CD14-positive monocyte (primary cell): ENCODE measurements at regions of chr16 and their contacts with region 1.

Region 1: DNA sequence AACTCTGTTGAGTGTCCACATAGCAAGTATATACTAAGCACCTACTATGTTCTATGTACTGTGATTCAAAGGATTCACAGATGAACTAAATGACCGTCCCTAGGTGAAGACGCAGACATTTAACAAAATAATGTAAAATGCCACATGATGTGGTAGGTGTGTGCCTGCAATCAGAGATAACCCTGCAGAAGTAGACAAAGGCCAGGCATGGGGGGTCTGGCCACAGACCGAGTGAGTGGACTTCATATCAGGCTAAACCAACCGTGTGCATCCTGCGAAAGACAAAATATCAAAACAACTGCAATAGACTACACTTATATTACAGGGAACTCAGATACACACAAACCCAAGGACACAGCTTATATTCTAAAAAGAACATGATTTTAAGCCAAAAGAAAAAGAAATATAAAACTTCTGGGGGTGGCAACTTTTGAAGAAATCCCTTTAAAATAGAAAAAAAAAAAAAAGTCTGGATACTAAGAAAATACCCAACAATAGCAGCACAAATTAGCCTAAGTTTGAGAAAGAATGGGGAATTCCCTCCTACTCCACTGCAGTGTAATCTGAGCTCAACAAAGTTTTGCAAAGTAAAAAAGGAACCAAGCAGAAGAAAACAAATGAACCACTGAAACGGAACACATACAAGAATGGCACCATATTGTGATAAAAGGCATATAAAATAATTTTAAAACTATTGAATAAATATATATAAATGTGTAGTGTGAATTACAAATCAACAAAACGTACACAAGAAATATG is 12.3 kb downstream of the HSDL1 start:
- DNase-seq: no peak
- H3K4me3 ChIP-seq: no peak overlapping the region
- H3K4me3 Mint-ChIP-seq: no peak overlapping the region
- H3K27ac ChIP-seq: no peak overlapping the region
- H3K27ac Mint-ChIP-seq: peak overlapping the region in 1 of 7 donors; percentile 21
- H3K4me1 ChIP-seq: no peaks in the 10 kb centered on the region
- H3K4me1 Mint-ChIP-seq: peaks cover 2% of the 10 kb centered on the region
- H3K27me3 ChIP-seq: no peaks in the 10 kb centered on the region
- H3K27me3 Mint-ChIP-seq: no peaks in the 10 kb centered on the region
- CTCF ChIP-seq: no peak

Region 2: GRCh38 chr16:83779886-83780285 is 352.8 kb before region 1 on chr16:
- intact Hi-C with region 1: no loop called
- DNase-seq: no peak
- H3K4me3 ChIP-seq: no peak overlapping the region
- H3K4me3 Mint-ChIP-seq: no peak overlapping the region
- H3K27ac ChIP-seq: no peak overlapping the region
- H3K27ac Mint-ChIP-seq: no peak overlapping the region
- H3K4me1 ChIP-seq: peaks cover 16 to 18% of the 10 kb centered on the region in 2 donors
- H3K4me1 Mint-ChIP-seq: peaks cover 19% of the 10 kb centered on the region
- H3K27me3 ChIP-seq: peaks cover 0 to 7% of the 10 kb centered on the region in 2 donors
- H3K27me3 Mint-ChIP-seq: peaks cover 13 to 30% (median 21%) of the 10 kb centered on the region in 3 donors
- CTCF ChIP-seq: no peak

Region 3: DNA sequence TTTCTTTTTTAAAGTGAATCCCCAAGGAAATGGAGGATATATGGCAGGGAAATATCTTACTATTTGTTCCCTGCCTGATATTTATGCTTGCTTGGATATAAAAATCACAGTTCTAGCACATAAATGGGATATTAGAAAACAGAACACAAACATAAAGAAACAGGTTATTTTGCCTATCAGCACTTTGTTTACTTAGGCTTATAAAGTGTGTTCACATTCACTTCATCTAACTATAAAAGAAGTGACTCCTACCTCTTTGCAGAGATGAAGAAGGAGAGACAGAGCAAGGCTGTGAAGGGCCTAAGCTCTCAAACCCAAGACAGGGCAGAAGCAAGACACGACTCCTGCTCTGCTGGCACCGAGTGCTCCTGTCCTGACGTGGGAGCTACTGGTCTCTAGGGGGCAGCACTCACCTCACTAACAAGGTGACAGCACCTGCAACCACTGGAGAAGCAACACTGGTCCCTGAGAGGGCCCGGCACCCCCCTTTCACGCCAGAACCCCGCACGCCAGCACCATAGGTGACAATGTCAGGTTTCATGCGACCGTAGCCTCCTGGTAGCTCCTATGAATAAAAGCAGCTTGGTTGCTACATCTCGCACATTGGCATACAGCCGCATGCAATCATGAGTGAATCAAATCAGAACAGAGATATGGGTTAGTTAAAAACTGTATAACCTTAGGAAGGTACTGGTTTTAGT is 48.0 kb before region 1 on chr16:
- intact Hi-C with region 1: loop called in 1 of 2 experiments (anchors 5 kb)
- DNase-seq: peak in 2 of 3 donors; percentile 48 to 63
- H3K4me3 ChIP-seq: no peak overlapping the region
- H3K4me3 Mint-ChIP-seq: no peak overlapping the region
- H3K27ac ChIP-seq: peak overlapping the region; percentile 6 to 42
- H3K27ac Mint-ChIP-seq: peak overlapping the region in 3 of 7 donors; percentile 7 to 70 (median 57)
- H3K4me1 ChIP-seq: peaks cover 60 to 67% of the 10 kb centered on the region in 2 donors
- H3K4me1 Mint-ChIP-seq: peaks cover 68% of the 10 kb centered on the region
- H3K27me3 ChIP-seq: no peaks in the 10 kb centered on the region
- H3K27me3 Mint-ChIP-seq: peaks cover 0 to 3% (median 0%) of the 10 kb centered on the region in 3 donors
- CTCF ChIP-seq: peak; percentile 77

Region 4: DNA sequence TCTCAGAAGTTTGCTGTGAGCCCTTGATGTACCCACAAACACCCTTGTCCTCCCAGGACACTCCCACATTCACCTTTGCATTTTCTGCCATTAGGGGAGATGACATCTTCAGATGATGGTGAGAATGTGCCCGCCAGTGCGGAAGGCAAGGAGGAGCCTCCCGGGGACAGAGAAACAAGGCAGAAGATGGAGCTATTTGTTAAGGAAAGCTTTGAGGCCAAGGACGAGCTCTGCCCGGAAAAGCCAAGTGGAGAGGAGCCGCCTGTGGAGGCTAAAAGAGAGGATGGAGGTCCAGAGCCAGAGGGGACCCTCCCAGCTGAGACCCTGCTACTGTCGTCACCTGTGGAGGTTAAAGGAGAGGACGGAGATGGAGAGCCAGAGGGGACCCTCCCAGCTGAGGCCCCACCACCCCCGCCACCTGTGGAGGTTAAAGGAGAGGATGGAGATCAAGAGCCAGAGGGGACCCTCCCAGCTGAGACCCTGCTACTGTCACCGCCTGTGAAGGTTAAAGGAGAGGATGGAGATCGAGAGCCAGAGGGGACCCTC is 37.1 kb after region 1 on chr16:
- intact Hi-C with region 1: loop called in 1 of 2 experiments (anchors 5 kb)
- DNase-seq: no peak
- H3K4me3 ChIP-seq: no peak overlapping the region
- H3K4me3 Mint-ChIP-seq: no peak overlapping the region
- H3K27ac ChIP-seq: no peak overlapping the region
- H3K27ac Mint-ChIP-seq: peak overlapping the region in 1 of 7 donors; percentile 12
- H3K4me1 ChIP-seq: peaks cover under 1 to 3% of the 10 kb centered on the region in 2 donors
- H3K4me1 Mint-ChIP-seq: peaks cover 5% of the 10 kb centered on the region
- H3K27me3 ChIP-seq: peaks cover 2 to 8% of the 10 kb centered on the region in 2 donors
- H3K27me3 Mint-ChIP-seq: peaks cover 9 to 24% (median 17%) of the 10 kb centered on the region in 3 donors
- CTCF ChIP-seq: no peak